Activated B cell treated with CpG ODN at 0.5 μM for 24 hours (primary cell): ENCODE measurements at regions of chr11 and their contacts with region 1.

Region 1: DNA sequence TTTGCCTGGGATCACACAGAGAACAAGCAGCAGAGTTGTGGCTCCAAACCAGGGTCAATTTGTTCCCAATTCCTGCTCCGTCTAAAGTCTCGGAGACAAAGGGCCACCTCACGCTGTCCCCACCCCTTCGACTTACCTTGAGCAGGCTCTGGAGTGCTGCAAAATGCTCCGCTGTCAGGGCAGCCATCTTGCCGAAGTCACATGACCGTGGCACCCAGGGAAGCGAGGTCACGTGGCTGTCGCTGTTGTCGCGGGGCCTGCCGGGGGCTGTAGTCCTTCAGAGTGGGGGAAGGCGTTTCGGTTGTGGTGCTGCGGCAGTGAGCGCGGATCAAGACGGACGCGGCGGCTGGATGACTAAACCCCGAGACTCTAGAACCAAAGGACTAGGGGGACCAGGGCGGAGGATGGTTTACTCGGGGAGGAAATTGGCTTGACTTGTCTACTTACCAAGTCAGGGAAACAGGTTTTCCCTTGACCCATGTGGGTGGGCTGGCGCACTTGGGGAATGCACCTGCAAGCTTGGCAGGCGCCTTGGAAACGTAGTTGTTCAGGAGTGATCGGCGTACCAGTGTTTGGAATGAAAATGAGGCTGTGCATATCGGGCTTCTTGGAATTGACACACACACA is at the start of gene COMMD9:
- DNase-seq: peak; percentile 85
- ATAC-seq: peak; percentile 96
- H3K4me3 Mint-ChIP-seq: peak within 1 kb of the TSS; percentile 95
- H3K27ac Mint-ChIP-seq: peak within 1 kb of the TSS; percentile 89
- H3K4me1 Mint-ChIP-seq: peaks cover 35% of the 10 kb centered on the region
- H3K27me3 Mint-ChIP-seq: no peaks in the 10 kb centered on the region
- CTCF ChIP-seq: no peak
- total RNA-seq, gene COMMD9: 54.4 and 61.0 TPM in 2 replicates

Region 2: GRCh38 chr11:35662649-35663407 is 626.5 kb before region 1 on chr11 and contains the start of gene TRIM44:
- CTCF ChIA-PET with region 1: no interaction called
- POLR2A ChIA-PET with region 1: no interaction called
- intact Hi-C with region 1: loop called (anchors 1 kb)
- DNase-seq: peak; percentile 77
- ATAC-seq: peak; percentile 82
- H3K4me3 Mint-ChIP-seq: peak within 1 kb of the TSS; percentile 98
- H3K27ac Mint-ChIP-seq: peak within 1 kb of the TSS; percentile 98
- H3K4me1 Mint-ChIP-seq: peaks cover 50% of the 10 kb centered on the region
- H3K27me3 Mint-ChIP-seq: peaks cover 3% of the 10 kb centered on the region
- CTCF ChIP-seq: no peak
- total RNA-seq, gene TRIM44: 66.7 and 67.0 TPM in 2 replicates

Region 3: GRCh38 chr11:36478700-36479329 is 189.5 kb after region 1 on chr11:
- CTCF ChIA-PET with region 1: interaction called, 43 read pairs
- POLR2A ChIA-PET with region 1: no interaction called
- intact Hi-C with region 1: loop called (anchors 1 kb)
- DNase-seq: no peak
- ATAC-seq: no peak
- H3K4me3 Mint-ChIP-seq: no peak overlapping the region
- H3K27ac Mint-ChIP-seq: no peak overlapping the region
- H3K4me1 Mint-ChIP-seq: no peaks in the 10 kb centered on the region
- H3K27me3 Mint-ChIP-seq: no peaks in the 10 kb centered on the region
- CTCF ChIP-seq: no peak

Region 4: GRCh38 chr11:36509694-36510566 is 220.6 kb after region 1 on chr11 and contains the start of gene TRAF6:
- CTCF ChIA-PET with region 1: interaction called, 19 read pairs
- POLR2A ChIA-PET with region 1: interaction called, 10 read pairs
- intact Hi-C with region 1: loop called (anchors 1 kb)
- DNase-seq: peak; percentile 92
- ATAC-seq: peak; percentile 95
- H3K4me3 Mint-ChIP-seq: peak within 1 kb of the TSS; percentile 97
- H3K27ac Mint-ChIP-seq: peak within 1 kb of the TSS; percentile 91
- H3K4me1 Mint-ChIP-seq: peaks cover 19% of the 10 kb centered on the region
- H3K27me3 Mint-ChIP-seq: peaks cover 9% of the 10 kb centered on the region
- CTCF ChIP-seq: peak; percentile 72
- total RNA-seq, gene TRAF6: 16.9 and 19.3 TPM in 2 replicates

Region 5: DNA sequence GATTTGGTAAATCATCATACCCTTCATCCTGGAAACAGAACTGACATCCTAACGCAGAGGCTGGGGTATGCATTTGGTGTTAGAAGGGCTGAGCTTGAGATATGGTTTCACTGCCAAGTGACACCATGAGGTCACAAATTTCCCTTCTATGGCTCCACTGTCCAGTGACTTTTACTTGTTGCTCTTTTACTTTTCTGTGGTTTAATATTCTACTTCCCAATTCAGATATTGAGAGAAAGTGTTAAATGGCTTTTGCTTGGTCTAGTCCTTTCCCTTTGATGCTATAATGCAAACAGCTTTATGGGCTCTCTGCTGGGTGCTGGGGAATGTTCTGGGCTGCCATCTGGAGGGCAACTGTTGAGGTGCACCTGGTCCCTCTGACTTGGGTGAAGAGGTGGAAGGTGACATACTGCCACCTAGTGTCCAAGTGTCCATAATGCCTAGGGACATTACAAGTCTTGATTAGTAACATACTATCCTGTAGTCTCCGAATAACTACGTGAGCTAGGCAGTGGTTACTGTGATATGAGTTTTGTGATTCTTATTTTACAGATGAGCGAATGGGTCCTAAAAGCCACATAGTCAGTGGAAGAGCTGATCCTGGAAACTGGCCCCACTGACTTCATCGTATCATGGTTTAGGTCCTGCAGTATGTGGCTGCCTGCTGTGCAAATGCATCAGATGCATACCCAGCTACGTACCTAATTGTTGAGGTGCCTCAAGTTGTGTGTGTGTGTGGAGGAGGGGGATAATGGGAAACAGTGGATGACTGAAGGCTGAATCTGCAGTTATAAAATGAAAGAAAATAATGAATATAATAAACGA is 457.8 kb after region 1 on chr11:
- CTCF ChIA-PET with region 1: interaction called, 8 read pairs
- POLR2A ChIA-PET with region 1: no interaction called
- intact Hi-C with region 1: loop called (anchors 1 kb)
- DNase-seq: peak; percentile 34
- ATAC-seq: peak; percentile 100
- H3K4me3 Mint-ChIP-seq: no peak overlapping the region
- H3K27ac Mint-ChIP-seq: no peak overlapping the region
- H3K4me1 Mint-ChIP-seq: peaks cover 5% of the 10 kb centered on the region
- H3K27me3 Mint-ChIP-seq: peaks cover 10% of the 10 kb centered on the region
- CTCF ChIP-seq: peak; percentile 91